Activated CD4-positive, alpha-beta T cell treated with anti-CD3 and anti-CD28 coated beads, Interleukin-2, amount 10 ng/mL, durations not matched to agents 7 days and 5 days (primary cell): ENCODE measurements at regions of chr2 and their contacts with region 1.

Region 1: DNA sequence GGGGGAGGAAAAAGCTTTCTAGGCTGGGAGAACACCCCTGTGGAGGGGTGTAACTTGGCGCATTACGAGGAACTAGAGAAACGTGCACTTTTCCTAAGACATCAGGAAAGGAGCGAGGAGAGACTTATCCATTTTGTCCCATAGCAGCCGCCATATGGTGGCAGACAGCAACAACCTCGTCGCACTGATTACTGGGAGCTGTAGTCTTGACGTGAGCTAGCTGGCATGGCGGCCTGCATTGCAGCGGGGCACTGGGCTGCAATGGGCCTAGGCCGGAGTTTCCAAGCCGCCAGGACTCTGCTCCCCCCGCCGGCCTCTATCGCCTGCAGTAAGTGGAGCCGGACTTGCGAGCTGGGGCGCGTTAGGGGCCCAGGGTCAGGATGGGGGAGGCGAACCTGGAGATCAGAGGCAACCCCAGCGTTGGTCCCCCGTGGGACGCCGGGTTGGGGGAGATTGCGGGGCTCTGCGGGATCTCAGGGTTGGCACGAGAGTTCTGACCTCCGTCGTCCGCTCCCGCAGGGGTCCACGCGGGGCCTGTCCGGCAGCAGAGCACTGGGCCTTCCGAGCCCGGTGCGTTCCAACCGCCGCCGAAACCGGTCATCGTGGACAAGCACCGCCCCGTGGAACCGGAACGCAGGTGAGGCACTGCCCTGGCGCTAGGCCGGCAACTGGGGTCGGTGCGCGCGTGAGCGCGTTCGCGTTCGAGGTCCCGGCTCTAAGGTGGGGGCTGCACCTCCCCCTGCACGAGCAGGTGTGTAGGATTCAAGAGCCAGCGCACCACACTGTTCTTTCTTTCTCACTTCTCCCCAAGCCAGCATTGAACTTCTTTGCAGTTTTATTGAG is at the start of gene MRPL19:
- DNase-seq: peak; percentile 86
- H3K4me3 Mint-ChIP-seq: peak within 1 kb of the TSS; percentile 94
- H3K27ac Mint-ChIP-seq: peak within 1 kb of the TSS; percentile 95
- H3K4me1 Mint-ChIP-seq: peaks cover 33% of the 10 kb centered on the region
- H3K27me3 Mint-ChIP-seq: no peaks in the 10 kb centered on the region
- total RNA-seq, gene MRPL19: 33.9 to 38.3 TPM

Region 2: GRCh38 chr2:75710577-75711253 is 63.9 kb after region 1 on chr2 and contains the start of gene GCFC2:
- CTCF ChIA-PET with region 1: interaction called, 11 read pairs
- POLR2A ChIA-PET with region 1: no interaction called
- DNase-seq: peak; percentile 82
- H3K4me3 Mint-ChIP-seq: peak within 1 kb of the TSS; percentile 80
- H3K27ac Mint-ChIP-seq: peak within 1 kb of the TSS; percentile 95
- H3K4me1 Mint-ChIP-seq: peaks cover 36% of the 10 kb centered on the region
- H3K27me3 Mint-ChIP-seq: peaks cover 2% of the 10 kb centered on the region
- total RNA-seq, gene GCFC2: 23.1 to 25.4 TPM

Region 3: GRCh38 chr2:75928093-75928492 is 281.3 kb after region 1 on chr2:
- CTCF ChIA-PET with region 1: no interaction called
- POLR2A ChIA-PET with region 1: no interaction called
- DNase-seq: no peak
- H3K4me3 Mint-ChIP-seq: no peak overlapping the region
- H3K27ac Mint-ChIP-seq: no peak overlapping the region
- H3K4me1 Mint-ChIP-seq: no peaks in the 10 kb centered on the region
- H3K27me3 Mint-ChIP-seq: no peaks in the 10 kb centered on the region